ENCODE measurements at regions of chr3 and their contacts with region 1.

Region 1: GRCh38 chr3:44913868-44914468 is 39.6 kb downstream of the TGM4 start:
- DNase-seq: peak; percentile 70
- H3K4me3 ChIP-seq: no peak overlapping the region
- H3K27ac ChIP-seq: no peak overlapping the region
- H3K4me1 ChIP-seq: peaks cover 3% of the 10 kb centered on the region
- H3K27me3 ChIP-seq: peaks cover 0 to 8% of the 10 kb centered on the region in 2 experiments
- CTCF ChIP-seq: peak; percentile 91 to 93
- POLR2A ChIP-seq: no peak

Region 2: DNA sequence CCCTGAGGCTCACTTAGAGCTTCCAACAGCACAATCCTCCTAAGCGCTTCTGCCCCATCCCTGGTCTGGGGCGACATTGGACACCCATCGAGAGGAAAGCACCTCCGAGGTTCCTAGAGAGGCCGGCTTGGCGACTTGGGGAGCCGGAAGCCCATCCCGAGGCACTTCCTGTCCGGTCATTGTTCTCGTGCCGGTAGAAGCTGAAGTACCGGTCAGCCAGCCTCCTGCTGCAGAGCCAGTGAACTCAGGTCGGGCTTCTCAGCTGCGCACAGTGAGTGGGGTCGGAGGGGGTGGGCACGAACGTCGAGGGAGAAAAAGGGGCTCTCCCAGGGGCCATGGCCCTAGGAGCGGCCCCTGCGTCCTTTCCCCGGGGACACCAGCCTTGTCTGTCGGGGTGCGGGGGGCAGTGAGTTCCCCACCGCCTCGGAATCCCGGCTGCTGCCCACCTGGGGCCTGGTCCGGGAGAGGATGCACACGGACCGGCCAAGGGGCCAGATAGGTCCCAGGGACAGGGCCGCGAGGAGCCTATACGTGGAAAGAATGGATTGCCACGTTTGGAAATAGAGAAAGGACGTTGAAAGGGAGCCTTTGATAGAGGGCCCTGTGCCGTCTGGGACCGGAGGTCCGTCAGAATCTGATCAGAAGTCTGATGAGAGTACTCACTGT is 265.3 kb before region 1 on chr3 and contains the start of gene ZNF35:
- CTCF ChIA-PET with region 1: no interaction called
- POLR2A ChIA-PET with region 1: no interaction called
- dilution Hi-C with region 1: no loop called
- intact Hi-C with region 1: loop called (anchors 1 kb)
- DNase-seq: peak; percentile 84
- H3K4me3 ChIP-seq: peak within 1 kb of the TSS; percentile 83 to 97 (median 96)
- H3K27ac ChIP-seq: peak within 1 kb of the TSS; percentile 66
- H3K4me1 ChIP-seq: peaks cover 8% of the 10 kb centered on the region
- H3K27me3 ChIP-seq: no peaks in the 10 kb centered on the region
- CTCF ChIP-seq: no peak
- POLR2A ChIP-seq: peak; percentile 88
- total RNA-seq, gene ZNF35: 9.1 and 11.3 TPM in 2 replicates

Region 3: GRCh38 chr3:44805960-44806359 is 108.0 kb before region 1 on chr3:
- CTCF ChIA-PET with region 1: no interaction called
- POLR2A ChIA-PET with region 1: no interaction called
- dilution Hi-C with region 1: no loop called
- intact Hi-C with region 1: loop called (anchors 5 kb)
- DNase-seq: no peak
- H3K4me3 ChIP-seq: no peak overlapping the region
- H3K27ac ChIP-seq: no peak overlapping the region
- H3K4me1 ChIP-seq: no peaks in the 10 kb centered on the region
- H3K27me3 ChIP-seq: no peaks in the 10 kb centered on the region
- CTCF ChIP-seq: no peak
- POLR2A ChIP-seq: no peak

Region 4: GRCh38 chr3:44861412-44862220 is 52.4 kb before region 1 on chr3 and contains the start of gene TMEM42:
- CTCF ChIA-PET with region 1: interaction called, 3 read pairs
- POLR2A ChIA-PET with region 1: no interaction called
- dilution Hi-C with region 1: no loop called
- intact Hi-C with region 1: loop called (anchors 1 kb)
- DNase-seq: peak; percentile 95
- H3K4me3 ChIP-seq: peak within 1 kb of the TSS; percentile 66 to 88 (median 72)
- H3K27ac ChIP-seq: peak within 1 kb of the TSS; percentile 71
- H3K4me1 ChIP-seq: peaks cover 7% of the 10 kb centered on the region
- H3K27me3 ChIP-seq: no peaks in the 10 kb centered on the region
- CTCF ChIP-seq: peak in 1 of 2 donors; percentile 40
- POLR2A ChIP-seq: peak; percentile 86
- total RNA-seq, gene TMEM42: 10.6 and 13.6 TPM in 2 replicates